CD8-positive, alpha-beta T cell (primary cell): ENCODE measurements at regions of chr1 and their contacts with region 1.

Region 1: GRCh38 chr1:23959041-23959460 is 577 bp upstream of the PNRC2 start:
- DNase-seq: peak; percentile 76 to 98 (median 90)
- ATAC-seq: peak; percentile 79
- H3K4me3 ChIP-seq: peak overlapping the region; percentile 83 to 97
- H3K4me3 Mint-ChIP-seq: peak overlapping the region; percentile 100
- H3K27ac ChIP-seq: peak overlapping the region; percentile 95
- H3K27ac Mint-ChIP-seq: peak overlapping the region; percentile 100
- H3K4me1 ChIP-seq: peaks cover 32% of the 10 kb centered on the region
- H3K4me1 Mint-ChIP-seq: peaks cover 59% of the 10 kb centered on the region
- H3K27me3 ChIP-seq: no peaks in the 10 kb centered on the region
- H3K27me3 Mint-ChIP-seq: no peaks in the 10 kb centered on the region
- CTCF ChIP-seq: peak; percentile 34

Region 2: GRCh38 chr1:23673086-23673813 is 285.8 kb before region 1 on chr1:
- CTCF ChIA-PET with region 1: no interaction called
- POLR2A ChIA-PET with region 1: no interaction called
- intact Hi-C with region 1: no loop called
- DNase-seq: peak in 1 of 9 experiments; percentile 20
- ATAC-seq: no peak
- H3K4me3 ChIP-seq: no peak overlapping the region
- H3K4me3 Mint-ChIP-seq: no peak overlapping the region
- H3K27ac ChIP-seq: no peak overlapping the region
- H3K27ac Mint-ChIP-seq: no peak overlapping the region
- H3K4me1 ChIP-seq: no peaks in the 10 kb centered on the region
- H3K4me1 Mint-ChIP-seq: no peaks in the 10 kb centered on the region
- H3K27me3 ChIP-seq: no peaks in the 10 kb centered on the region
- H3K27me3 Mint-ChIP-seq: peaks cover 6% of the 10 kb centered on the region
- CTCF ChIP-seq: no peak

Region 3: DNA sequence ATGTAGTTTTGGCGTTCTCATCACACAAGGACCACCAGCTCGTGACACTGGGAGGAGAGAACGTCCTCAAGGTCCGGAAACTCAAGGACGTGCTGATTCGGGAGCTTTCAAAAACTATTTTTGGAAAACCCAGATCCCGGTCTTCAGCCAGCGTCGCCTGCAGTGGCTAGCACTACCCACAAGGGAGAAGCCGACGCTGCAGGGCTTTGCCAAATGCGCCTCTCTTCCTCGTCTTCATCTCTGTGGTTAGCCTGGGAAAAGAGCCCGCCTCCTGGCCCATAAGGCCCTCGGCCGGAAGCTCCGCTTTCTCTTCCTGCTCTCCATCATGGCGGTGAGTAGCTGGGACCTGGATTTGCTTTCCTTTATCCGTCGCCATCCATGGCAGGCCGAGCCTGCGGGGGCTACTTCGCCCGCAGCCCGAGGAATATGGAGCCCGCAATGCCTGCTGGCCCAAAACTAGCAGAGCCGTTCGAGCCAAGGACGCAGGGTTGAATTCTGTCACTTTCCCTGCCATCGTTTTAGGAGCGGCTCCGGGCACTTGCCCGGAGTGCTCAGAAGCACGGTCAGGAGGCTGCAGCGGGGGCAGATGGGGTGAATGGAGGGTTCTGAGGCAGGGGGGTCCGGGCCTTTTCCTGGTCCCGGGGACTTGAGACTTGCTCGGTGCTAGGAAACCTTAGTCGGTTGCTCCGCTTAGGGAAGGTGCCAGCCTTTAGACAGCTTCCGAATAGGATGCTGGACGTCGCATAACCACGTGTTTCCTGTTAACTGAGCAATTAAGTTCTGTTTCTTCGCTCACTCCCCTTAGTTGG is 267.3 kb before region 1 on chr1 and contains the start of gene RPL11:
- CTCF ChIA-PET with region 1: no interaction called
- POLR2A ChIA-PET with region 1: no interaction called
- intact Hi-C with region 1: loop called (anchors 1 to 5 kb)
- DNase-seq: peak; percentile 73 to 95 (median 88)
- ATAC-seq: peak; percentile 99
- H3K4me3 ChIP-seq: peak within 1 kb of the TSS; percentile 68 to 84
- H3K4me3 Mint-ChIP-seq: peak within 1 kb of the TSS; percentile 96
- H3K27ac ChIP-seq: peak within 1 kb of the TSS; percentile 74 to 87
- H3K27ac Mint-ChIP-seq: peak within 1 kb of the TSS; percentile 97
- H3K4me1 ChIP-seq: peaks cover 41% of the 10 kb centered on the region
- H3K4me1 Mint-ChIP-seq: peaks cover 46% of the 10 kb centered on the region
- H3K27me3 ChIP-seq: no peaks in the 10 kb centered on the region
- H3K27me3 Mint-ChIP-seq: no peaks in the 10 kb centered on the region
- CTCF ChIP-seq: peak; percentile 77
- total RNA-seq, gene RPL11: 2,153 to 2,178 TPM

Region 4: GRCh38 chr1:23800400-23801337 is 158.4 kb before region 1 on chr1 and contains the start of gene GALE:
- CTCF ChIA-PET with region 1: no interaction called
- POLR2A ChIA-PET with region 1: interaction called, 4 read pairs
- intact Hi-C with region 1: loop called (anchors 1 to 2 kb)
- DNase-seq: peak; percentile 95 to 98 (median 97)
- ATAC-seq: peak; percentile 93
- H3K4me3 ChIP-seq: peak within 1 kb of the TSS; percentile 57 to 66
- H3K4me3 Mint-ChIP-seq: peak within 1 kb of the TSS; percentile 93
- H3K27ac ChIP-seq: peak within 1 kb of the TSS; percentile 78 to 82
- H3K27ac Mint-ChIP-seq: peak within 1 kb of the TSS; percentile 91
- H3K4me1 ChIP-seq: peaks cover 18% of the 10 kb centered on the region
- H3K4me1 Mint-ChIP-seq: peaks cover 12% of the 10 kb centered on the region
- H3K27me3 ChIP-seq: no peaks in the 10 kb centered on the region
- H3K27me3 Mint-ChIP-seq: no peaks in the 10 kb centered on the region
- CTCF ChIP-seq: no peak
- total RNA-seq, gene GALE: 4.6 to 4.7 TPM

Region 5: DNA sequence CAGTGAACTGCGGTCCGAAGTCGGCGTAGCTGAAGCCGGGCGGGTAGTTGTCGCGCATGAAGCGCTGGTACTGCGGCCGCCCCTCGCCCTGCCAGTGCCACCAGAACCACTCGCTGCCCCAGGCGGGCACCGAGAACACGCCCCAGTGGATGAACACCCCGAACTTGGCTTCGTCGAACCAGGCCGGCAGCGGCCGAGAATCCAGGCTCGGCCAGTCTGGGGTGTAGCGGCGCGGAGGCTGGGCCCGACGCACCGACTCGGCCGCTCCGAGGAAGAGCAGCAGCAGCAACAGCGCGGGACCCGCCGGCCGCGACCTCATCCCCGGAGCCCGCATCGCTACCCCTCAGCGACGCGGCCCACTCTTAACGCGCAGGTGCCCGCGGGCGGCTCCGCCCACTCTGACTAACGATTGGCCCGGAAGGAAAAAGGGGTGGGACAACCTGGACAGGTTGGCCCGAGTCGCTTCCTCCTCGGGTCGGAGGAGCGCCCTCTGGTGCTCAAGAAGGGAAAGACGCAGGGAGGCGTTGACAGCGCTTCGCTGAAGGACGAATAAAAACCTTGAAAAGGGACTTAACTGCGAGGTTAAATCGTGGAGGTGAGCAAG is 91.0 kb before region 1 on chr1 and contains the start of gene FUCA1:
- CTCF ChIA-PET with region 1: no interaction called
- POLR2A ChIA-PET with region 1: no interaction called
- intact Hi-C with region 1: loop called in 1 of 2 experiments (anchors 1 kb)
- DNase-seq: peak; percentile 91 to 98 (median 96)
- ATAC-seq: peak; percentile 98
- H3K4me3 ChIP-seq: peak within 1 kb of the TSS; percentile 77 to 84
- H3K4me3 Mint-ChIP-seq: peak within 1 kb of the TSS; percentile 85
- H3K27ac ChIP-seq: peak within 1 kb of the TSS; percentile 67 to 69
- H3K27ac Mint-ChIP-seq: peak within 1 kb of the TSS; percentile 87
- H3K4me1 ChIP-seq: peaks cover 23% of the 10 kb centered on the region
- H3K4me1 Mint-ChIP-seq: peaks cover 26% of the 10 kb centered on the region
- H3K27me3 ChIP-seq: no peaks in the 10 kb centered on the region
- H3K27me3 Mint-ChIP-seq: no peaks in the 10 kb centered on the region
- CTCF ChIP-seq: peak; percentile 72
- total RNA-seq, gene FUCA1: 5.3 to 5.7 TPM

Region 6: DNA sequence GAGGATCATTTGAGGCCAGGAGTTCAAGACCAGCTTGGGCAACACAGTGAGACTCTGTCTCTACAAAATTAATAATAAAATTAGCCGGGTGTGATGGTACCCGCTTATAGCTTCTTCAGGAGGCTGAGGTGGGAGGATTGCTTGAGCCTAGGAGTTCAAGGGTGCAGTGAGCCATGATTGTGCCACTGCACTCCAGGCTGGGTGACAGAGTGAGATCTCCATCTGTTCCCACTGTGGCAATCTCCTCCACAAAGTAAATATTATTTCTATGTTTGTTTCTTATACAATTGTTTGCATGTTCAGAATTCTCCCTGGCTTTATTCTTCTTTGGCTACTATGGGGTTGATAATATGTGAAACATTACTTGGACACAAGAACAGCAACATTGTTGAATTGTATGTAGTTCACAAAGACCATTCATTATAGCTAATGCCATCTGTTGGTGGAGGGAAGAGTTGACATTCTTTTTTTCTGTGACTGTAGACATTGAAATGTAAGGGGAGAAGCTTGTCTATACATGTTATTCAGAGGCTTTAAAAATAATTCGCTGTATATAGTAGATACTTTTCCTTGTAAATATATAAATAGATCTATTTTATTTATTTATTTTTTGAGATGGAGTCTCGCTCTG is 68.9 kb after region 1 on chr1:
- CTCF ChIA-PET with region 1: interaction called, 4 read pairs
- POLR2A ChIA-PET with region 1: interaction called, 4 read pairs
- intact Hi-C with region 1: loop called (anchors 1 to 2 kb)
- DNase-seq: peak in 2 of 9 experiments; percentile 26 to 47
- ATAC-seq: no peak
- H3K4me3 ChIP-seq: no peak overlapping the region
- H3K4me3 Mint-ChIP-seq: no peak overlapping the region
- H3K27ac ChIP-seq: no peak overlapping the region
- H3K27ac Mint-ChIP-seq: no peak overlapping the region
- H3K4me1 ChIP-seq: no peaks in the 10 kb centered on the region
- H3K4me1 Mint-ChIP-seq: peaks cover 2% of the 10 kb centered on the region
- H3K27me3 ChIP-seq: no peaks in the 10 kb centered on the region
- H3K27me3 Mint-ChIP-seq: no peaks in the 10 kb centered on the region
- CTCF ChIP-seq: peak; percentile 27

Region 7: GRCh38 chr1:24142546-24143534 is 183.8 kb after region 1 on chr1 and contains the start of gene IL22RA1:
- CTCF ChIA-PET with region 1: no interaction called
- POLR2A ChIA-PET with region 1: no interaction called
- intact Hi-C with region 1: no loop called
- DNase-seq: no peak
- ATAC-seq: no peak
- H3K4me3 ChIP-seq: no peak within 1 kb of the TSS
- H3K4me3 Mint-ChIP-seq: no peak within 1 kb of the TSS
- H3K27ac ChIP-seq: no peak within 1 kb of the TSS
- H3K27ac Mint-ChIP-seq: no peak within 1 kb of the TSS
- H3K4me1 ChIP-seq: no peaks in the 10 kb centered on the region
- H3K4me1 Mint-ChIP-seq: peaks cover 2% of the 10 kb centered on the region
- H3K27me3 ChIP-seq: no peaks in the 10 kb centered on the region
- H3K27me3 Mint-ChIP-seq: peaks cover 27% of the 10 kb centered on the region
- CTCF ChIP-seq: no peak
- total RNA-seq, gene IL22RA1: not detected

Region 8: GRCh38 chr1:24536391-24536840 is 577.4 kb after region 1 on chr1:
- CTCF ChIA-PET with region 1: no interaction called
- POLR2A ChIA-PET with region 1: no interaction called
- intact Hi-C with region 1: loop called in 1 of 2 experiments (anchors 5 kb)
- DNase-seq: peak; percentile 54 to 96 (median 69)
- ATAC-seq: peak; percentile 77
- H3K4me3 ChIP-seq: no peak overlapping the region
- H3K4me3 Mint-ChIP-seq: peak overlapping the region; percentile 83
- H3K27ac ChIP-seq: peak overlapping the region; percentile 86
- H3K27ac Mint-ChIP-seq: peak overlapping the region; percentile 99
- H3K4me1 ChIP-seq: peaks cover 60% of the 10 kb centered on the region
- H3K4me1 Mint-ChIP-seq: peaks cover 73% of the 10 kb centered on the region
- H3K27me3 ChIP-seq: no peaks in the 10 kb centered on the region
- H3K27me3 Mint-ChIP-seq: no peaks in the 10 kb centered on the region
- CTCF ChIP-seq: no peak